Posterior vena cava (tissue), 2 donors: ENCODE measurements at regions of chr15 and their contacts with region 1.

Region 1: DNA sequence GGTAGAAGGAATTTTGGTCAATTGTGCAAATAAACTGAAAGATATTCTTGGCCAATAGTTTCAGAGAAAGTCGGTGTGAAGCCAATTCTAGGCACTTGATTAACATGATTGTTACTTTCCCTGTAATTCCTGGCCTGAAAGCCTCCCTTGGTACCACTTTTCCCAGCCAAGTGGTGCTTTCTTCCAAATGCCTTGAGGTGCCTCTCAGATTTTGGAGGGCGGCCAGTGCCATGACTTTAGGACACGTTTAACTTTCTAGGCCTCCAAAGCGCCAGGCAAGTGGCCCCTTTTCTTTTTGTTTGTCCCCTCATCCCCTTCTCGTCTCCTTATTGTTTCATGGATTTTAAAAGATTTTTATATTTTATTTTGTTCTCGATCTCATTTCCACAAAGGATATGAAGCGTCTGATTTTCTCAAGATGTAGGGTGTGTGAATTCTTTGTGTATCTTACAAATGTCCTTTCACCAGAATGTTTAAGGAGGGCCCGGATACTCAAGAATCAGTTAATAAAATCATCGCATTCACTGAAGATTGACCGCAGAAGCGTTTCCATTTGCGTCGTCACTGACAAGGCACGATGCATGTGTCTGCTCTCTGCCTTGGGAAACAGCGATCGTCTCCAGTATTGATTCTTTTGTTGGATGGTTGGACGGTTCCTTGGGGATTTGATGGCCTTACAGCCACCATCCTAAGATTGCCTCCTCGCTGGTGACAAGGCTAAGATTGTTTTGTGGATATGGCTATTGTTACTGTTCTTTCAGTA is 87.8 kb downstream of the ASB7 start:
- DNase-seq: no peak

Region 2: DNA sequence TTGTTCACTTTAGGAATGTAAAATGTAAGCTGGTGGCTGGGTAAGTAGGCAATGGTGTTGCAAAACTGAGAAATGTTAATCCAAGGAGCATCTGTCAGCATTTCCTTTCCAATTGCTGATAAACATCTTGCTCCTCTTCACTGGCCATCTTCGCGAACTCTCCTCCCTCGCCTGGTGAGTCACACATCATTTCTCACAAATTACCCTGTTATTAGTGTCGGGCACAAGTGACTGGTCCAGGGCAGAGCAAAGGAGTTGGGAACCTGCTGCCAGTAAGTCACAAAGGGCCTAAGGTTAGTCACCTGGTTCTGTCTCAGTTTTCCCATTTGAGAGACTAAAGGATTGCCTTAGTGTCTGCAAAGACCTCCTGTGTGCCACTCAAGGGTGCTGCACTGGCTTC is 174.5 kb before region 1 on chr15:
- intact Hi-C with region 1: no loop called
- DNase-seq: no peak

Region 3: DNA sequence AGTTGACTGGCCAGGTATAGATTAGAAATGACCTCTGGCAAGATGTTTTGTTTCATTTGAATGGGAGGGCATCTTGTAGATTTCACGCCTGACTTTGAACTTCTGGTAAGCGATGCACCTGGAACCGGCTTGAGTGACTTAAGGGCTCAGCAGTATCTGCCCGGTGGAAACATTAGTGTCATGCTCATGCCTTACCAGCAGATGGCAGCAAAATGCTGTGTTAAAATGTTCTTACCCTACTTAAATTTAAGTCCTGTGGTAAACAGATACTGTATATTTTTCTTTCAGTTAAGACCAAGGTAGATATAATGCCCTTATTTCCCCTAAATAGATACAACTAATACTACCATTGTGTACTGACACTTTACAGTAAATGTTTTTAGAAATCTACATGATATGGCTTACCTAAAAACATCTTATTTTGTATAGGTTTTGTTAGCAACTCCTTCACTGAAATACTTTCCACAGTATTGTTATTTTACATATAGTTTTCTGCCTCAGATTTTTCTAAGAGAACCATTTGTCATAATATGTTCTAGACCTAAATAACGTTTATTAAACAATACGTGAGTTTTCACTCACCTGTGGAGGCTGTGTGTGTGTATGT is 62.3 kb before region 1 on chr15:
- intact Hi-C with region 1: no loop called
- DNase-seq: no peak

Region 4: GRCh38 chr15:100728521-100729201 is 38.4 kb after region 1 on chr15:
- intact Hi-C with region 1: loop called in 1 of 2 experiments (anchors 1 kb)
- DNase-seq: no peak